Dorsolateral prefrontal cortex (tissue), 120 donors: ENCODE measurements at regions of chr14 and their contacts with region 1.

Region 1: GRCh38 chr14:20613094-20614037 is 22.2 kb upstream of the RNASE12 start:
- DNase-seq: peak; percentile 60 to 86 (median 72)
- H3K4me3 ChIP-seq: peak overlapping the region; percentile 43 to 78 (median 64)
- H3K27ac ChIP-seq: peak overlapping the region in 57 of 59 donors; percentile 7 to 88 (median 73)
- H3K27me3 ChIP-seq: no peaks in the 10 kb centered on the region
- CTCF ChIP-seq: peak; percentile 33 to 81 (median 66)

Region 2: GRCh38 chr14:20343092-20343861 is 270.1 kb before region 1 on chr14 and contains the start of gene PARP2:
- intact Hi-C with region 1: loop called (anchors 1 to 2 kb)
- DNase-seq: peak; percentile 95 to 98 (median 98)
- H3K4me3 ChIP-seq: peak within 1 kb of the TSS; percentile 57 to 98 (median 85)
- H3K27ac ChIP-seq: peak within 1 kb of the TSS; percentile 73 to 98 (median 93)
- H3K27me3 ChIP-seq: no peaks in the 10 kb centered on the region
- CTCF ChIP-seq: peak in 24 of 56 donors; percentile 11 to 49 (median 32)
- total RNA-seq, gene PARP2: 26.7 to 81.9 (median 48.4) TPM

Region 3: DNA sequence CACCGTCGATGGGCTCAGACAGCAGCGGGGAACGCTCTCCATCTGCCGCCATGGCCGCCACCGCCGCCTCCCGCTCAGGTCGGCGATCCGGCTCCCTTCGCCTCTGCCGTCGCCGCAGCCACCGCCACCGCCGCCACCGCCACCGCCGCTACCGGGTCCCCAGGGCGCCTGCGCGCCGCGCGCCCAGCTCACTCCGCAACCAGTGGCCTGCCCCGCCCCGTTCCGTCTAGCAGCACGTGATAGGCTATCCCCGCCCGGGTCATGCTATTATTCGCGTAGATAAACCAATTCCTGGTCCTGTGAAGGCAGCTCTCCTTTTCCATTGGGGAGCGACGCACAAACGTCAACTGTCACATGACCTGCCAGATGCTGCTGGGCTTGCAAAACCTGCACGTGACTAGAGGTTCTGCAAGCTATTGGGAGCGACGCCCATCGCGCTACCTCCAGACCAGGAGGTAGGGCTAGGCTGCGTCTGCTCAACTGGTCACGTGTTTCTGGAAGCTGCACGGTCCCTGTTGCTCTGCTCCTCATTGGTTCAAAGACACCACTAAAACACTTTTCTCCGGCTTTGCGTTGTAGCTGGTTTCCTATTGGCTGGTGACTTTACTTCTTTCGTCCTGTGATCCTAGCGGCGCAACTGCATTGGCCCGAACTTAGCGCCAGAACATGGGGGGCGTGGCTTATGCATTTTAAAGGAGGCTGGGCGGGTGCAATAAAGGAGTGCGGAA is 151.9 kb before region 1 on chr14 and contains the start of gene PIP4P1:
- intact Hi-C with region 1: loop called (anchors 5 kb)
- DNase-seq: peak; percentile 99 to 100 (median 99)
- H3K4me3 ChIP-seq: peak within 1 kb of the TSS; percentile 73 to 100 (median 95)
- H3K27ac ChIP-seq: peak within 1 kb of the TSS; percentile 63 to 98 (median 94)
- H3K27me3 ChIP-seq: no peaks in the 10 kb centered on the region
- CTCF ChIP-seq: peak in 14 of 56 donors; percentile 4 to 52 (median 22)
- total RNA-seq, gene PIP4P1: 40.7 to 70.2 (median 53.0) TPM

Region 4: GRCh38 chr14:20836668-20837338 is 223.4 kb after region 1 on chr14:
- intact Hi-C with region 1: no loop called
- DNase-seq: peak in 1 of 10 donors; percentile 43
- H3K4me3 ChIP-seq: peak overlapping the region in 1 of 59 donors; percentile 23
- H3K27ac ChIP-seq: peak overlapping the region in 3 of 59 donors; percentile 1 to 36 (median 35)
- H3K27me3 ChIP-seq: no peaks in the 10 kb centered on the region
- CTCF ChIP-seq: peak in 55 of 56 donors; percentile 18 to 73 (median 54)

Region 5: DNA sequence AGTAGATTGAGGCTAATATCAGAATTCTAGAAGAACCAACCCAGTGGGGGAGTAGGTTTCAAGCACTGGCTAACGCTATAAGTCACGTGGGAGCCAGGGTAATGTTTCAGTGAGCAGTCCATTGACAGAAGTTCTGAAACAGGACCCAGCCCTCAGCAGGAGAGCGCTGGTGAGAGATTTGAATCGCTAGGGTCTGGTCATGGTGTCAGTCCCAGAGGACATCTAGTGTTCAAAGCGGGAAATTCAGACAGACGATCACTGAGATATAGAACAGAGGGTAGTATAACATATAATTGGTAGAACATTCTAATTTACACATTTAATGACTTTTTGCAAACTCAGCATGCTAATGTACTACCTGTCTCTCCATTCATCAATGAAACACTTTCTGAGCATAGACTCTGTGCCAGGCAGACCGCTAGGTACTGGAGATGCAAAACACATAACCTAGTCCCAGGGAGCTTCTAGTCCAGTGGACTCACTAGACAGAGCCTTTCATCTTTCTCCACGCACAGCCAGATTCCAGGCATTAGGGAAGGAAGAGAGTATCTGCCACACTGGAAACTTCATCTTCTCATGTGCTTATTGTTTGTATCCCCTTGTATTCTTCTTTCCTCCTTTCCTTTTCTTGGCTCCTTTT is 242.4 kb after region 1 on chr14:
- intact Hi-C with region 1: loop called in 1 of 2 experiments (anchors 5 kb)
- DNase-seq: peak in 9 of 10 donors; percentile 17 to 76 (median 58)
- H3K4me3 ChIP-seq: no peak overlapping the region
- H3K27ac ChIP-seq: peak overlapping the region in 2 of 59 donors; percentile 36 to 45
- H3K27me3 ChIP-seq: peaks cover 0 to 14% (median 0%) of the 10 kb centered on the region in 45 donors
- CTCF ChIP-seq: peak; percentile 65 to 97 (median 89)

Region 6: DNA sequence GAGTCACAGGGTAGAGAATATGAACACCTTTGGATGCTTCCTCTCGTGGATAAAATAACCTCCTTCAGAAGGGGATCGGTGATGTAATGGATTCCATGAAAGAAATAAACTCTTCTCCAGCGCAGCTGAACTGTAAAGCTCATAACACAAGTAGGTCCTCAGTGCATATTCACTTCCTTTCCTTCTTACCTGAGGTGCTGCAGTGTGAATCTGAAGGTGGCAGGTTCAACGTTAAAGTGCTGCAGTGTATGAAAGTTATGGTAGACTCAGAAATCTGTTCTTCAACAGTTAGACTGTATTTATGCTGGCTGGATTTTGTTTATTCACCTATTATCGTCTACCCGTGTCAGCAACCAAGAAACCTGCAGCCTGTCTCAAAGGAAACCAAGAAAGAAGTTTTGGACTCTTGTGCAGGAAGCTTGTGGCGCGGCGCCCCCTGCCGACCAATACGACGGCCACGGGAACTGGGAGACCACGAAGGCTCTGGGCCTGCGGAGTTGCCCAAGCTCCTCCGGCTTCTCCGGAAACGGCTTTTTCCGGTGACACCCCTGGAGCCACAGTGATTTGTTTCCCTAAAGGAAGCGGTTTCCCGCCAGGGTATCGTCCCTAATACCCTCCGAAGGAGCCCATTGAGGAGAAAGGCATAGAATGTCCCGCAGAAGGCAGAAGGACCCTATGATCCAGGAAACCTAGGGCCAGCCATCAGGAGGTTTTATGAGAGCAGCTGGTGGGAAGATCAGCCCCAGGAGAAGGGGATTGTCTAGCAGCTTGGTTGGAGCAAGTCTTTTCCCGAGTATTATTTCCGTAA is 260.2 kb after region 1 on chr14:
- intact Hi-C with region 1: no loop called
- DNase-seq: peak; percentile 14 to 84 (median 78)
- H3K4me3 ChIP-seq: peak overlapping the region in 17 of 59 donors; percentile 2 to 34 (median 26)
- H3K27ac ChIP-seq: no peak overlapping the region
- H3K27me3 ChIP-seq: peaks cover 0 to 22% (median 0%) of the 10 kb centered on the region in 45 donors
- CTCF ChIP-seq: peak; percentile 45 to 90 (median 77)

Region 7: GRCh38 chr14:20970983-20971704 is 357.8 kb after region 1 on chr14:
- intact Hi-C with region 1: loop called in 1 of 2 experiments (anchors 5 kb)
- DNase-seq: peak; percentile 66 to 89 (median 76)
- H3K4me3 ChIP-seq: peak overlapping the region; percentile 54 to 97 (median 70)
- H3K27ac ChIP-seq: peak overlapping the region in 55 of 59 donors; percentile 10 to 88 (median 68)
- H3K27me3 ChIP-seq: peaks cover 0 to 20% (median 0%) of the 10 kb centered on the region in 45 donors
- CTCF ChIP-seq: peak; percentile 52 to 88 (median 78)